ENCODE measurements at regions of chr1 and their contacts with region 1.

Region 1: GRCh38 chr1:22052115-22053016 is at the start of gene CDC42:
- DNase-seq: peak; percentile 98
- ATAC-seq: peak; percentile 87
- H3K4me3 Mint-ChIP-seq: peak within 1 kb of the TSS; percentile 95
- H3K27ac Mint-ChIP-seq: peak within 1 kb of the TSS; percentile 91
- H3K4me1 Mint-ChIP-seq: peaks cover 58% of the 10 kb centered on the region
- H3K27me3 Mint-ChIP-seq: no peaks in the 10 kb centered on the region
- CTCF ChIP-seq: no peak
- total RNA-seq, gene CDC42: 310 and 324 TPM in 2 replicates

Region 2: DNA sequence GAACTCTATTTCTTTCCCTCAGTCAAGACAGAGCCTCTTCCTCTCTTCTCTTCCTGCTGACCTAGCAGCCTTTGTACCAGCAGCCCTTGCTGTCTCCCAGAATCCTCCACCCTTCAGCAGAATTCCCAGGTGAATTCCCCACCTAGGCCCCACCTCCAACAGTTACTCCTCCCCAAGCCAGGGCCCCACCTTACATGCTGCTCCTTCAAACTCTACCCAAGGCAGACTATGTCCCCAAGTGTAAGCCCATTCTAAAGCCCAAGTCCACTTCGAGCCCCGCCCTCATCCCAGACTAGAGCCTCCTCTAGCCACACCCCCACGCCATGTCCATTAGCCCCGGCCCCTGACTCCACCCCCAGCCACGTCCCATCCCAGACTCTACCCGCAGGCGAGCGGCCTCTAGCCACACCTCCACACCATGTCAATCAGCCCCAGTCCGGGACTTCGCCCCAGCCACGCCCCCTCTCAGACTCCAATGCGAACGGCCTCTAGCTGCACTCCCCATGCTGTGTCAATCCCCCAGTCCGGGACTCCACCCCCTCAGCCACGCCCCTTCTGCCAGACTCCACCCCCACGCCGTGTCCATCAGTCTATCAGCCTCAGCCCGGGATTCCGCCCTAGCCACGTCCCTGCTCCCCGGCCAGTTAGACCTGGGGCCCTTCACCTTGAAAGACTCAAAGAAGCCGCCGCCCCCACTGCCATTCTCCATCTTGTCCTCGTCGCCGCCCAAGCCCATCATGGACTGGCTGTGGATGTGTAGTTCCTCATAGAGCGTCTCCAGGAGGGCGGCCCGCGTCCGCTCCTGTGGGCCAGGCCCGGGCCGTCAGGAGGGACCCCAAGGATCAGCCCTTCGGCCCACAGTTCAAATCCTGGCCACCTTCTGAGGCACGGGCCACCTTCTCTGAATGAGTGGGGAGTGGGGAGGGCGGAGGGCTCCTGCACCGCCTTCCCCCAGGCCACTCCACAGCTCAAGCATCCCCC is 444.5 kb before region 1 on chr1:
- CTCF ChIA-PET with region 1: no interaction called
- POLR2A ChIA-PET with region 1: no interaction called
- intact Hi-C with region 1: no loop called
- DNase-seq: peak; percentile 41
- ATAC-seq: peak; percentile 95
- H3K4me3 Mint-ChIP-seq: peak overlapping the region; percentile 60
- H3K27ac Mint-ChIP-seq: no peak overlapping the region
- H3K4me1 Mint-ChIP-seq: peaks cover 18% of the 10 kb centered on the region
- H3K27me3 Mint-ChIP-seq: peaks cover 6% of the 10 kb centered on the region
- CTCF ChIP-seq: no peak

Region 3: DNA sequence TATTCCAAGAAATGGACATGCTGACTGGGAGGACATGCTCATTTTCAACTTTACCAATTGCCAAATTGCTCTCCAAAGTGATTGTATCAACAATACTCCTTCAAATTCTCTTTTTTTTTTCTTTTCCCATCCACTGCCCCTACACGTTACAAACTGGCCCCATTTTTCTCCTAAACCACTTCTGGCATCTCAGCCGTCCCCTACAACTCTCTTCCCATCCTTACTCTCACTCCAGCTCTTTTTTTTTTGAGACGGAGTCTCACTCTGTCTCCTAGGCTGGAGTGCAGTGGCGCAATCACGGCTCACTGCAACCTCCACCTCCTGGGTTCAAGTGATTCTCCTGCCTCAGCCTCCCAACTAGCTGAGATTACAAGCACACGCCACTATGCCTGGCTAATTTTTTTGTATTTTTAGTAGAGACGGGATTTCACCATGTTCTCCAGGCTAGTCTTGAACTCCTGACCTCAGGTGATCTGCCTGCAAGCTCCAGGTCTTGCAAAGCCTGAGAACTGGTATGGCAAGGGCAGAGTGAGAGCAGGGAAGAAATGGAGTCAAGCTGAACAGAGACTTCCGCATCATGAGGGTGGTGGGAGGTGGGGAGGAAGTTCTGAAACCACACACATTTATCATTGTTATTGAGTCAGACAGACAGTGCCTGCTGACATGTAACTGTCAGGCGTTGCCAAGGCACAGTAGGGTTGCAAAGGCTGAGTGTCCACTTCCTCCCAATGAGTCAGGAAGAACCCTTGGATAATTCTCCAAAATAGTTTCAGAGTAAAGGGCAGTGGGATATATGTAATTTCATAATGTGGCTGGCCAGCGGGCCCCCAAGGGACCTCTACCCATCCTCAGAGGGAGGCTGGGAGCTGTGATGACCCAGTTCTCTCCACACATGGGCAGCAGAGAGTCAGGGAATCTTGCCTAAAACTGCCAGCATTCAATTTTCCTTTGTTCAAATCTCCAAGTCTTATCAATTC is 33.5 kb before region 1 on chr1:
- CTCF ChIA-PET with region 1: interaction called, 16 read pairs
- POLR2A ChIA-PET with region 1: interaction called, 659 read pairs
- intact Hi-C with region 1: loop called (anchors 1 kb)
- DNase-seq: peak; percentile 35
- ATAC-seq: peak; percentile 93
- H3K4me3 Mint-ChIP-seq: peak overlapping the region; percentile 66
- H3K27ac Mint-ChIP-seq: peak overlapping the region; percentile 91
- H3K4me1 Mint-ChIP-seq: peaks cover 30% of the 10 kb centered on the region
- H3K27me3 Mint-ChIP-seq: no peaks in the 10 kb centered on the region
- CTCF ChIP-seq: no peak

Region 4: GRCh38 chr1:22039594-22040285 is 12.6 kb before region 1 on chr1:
- CTCF ChIA-PET with region 1: interaction called, 9 read pairs
- POLR2A ChIA-PET with region 1: interaction called, 158 read pairs
- intact Hi-C with region 1: loop called (anchors 1 kb)
- DNase-seq: peak; percentile 62
- ATAC-seq: peak; percentile 98
- H3K4me3 Mint-ChIP-seq: peak overlapping the region; percentile 76
- H3K27ac Mint-ChIP-seq: peak overlapping the region; percentile 95
- H3K4me1 Mint-ChIP-seq: peaks cover 53% of the 10 kb centered on the region
- H3K27me3 Mint-ChIP-seq: no peaks in the 10 kb centered on the region
- CTCF ChIP-seq: no peak

Region 5: GRCh38 chr1:22064751-22065402 is 12.5 kb after region 1 on chr1:
- CTCF ChIA-PET with region 1: no interaction called
- POLR2A ChIA-PET with region 1: interaction called, 8 read pairs
- intact Hi-C with region 1: loop called (anchors 2 kb)
- DNase-seq: no peak
- ATAC-seq: no peak
- H3K4me3 Mint-ChIP-seq: peak overlapping the region; percentile 56
- H3K27ac Mint-ChIP-seq: no peak overlapping the region
- H3K4me1 Mint-ChIP-seq: peaks cover 95% of the 10 kb centered on the region
- H3K27me3 Mint-ChIP-seq: no peaks in the 10 kb centered on the region
- CTCF ChIP-seq: no peak

Region 6: GRCh38 chr1:22075718-22076117 is 23.4 kb after region 1 on chr1:
- CTCF ChIA-PET with region 1: no interaction called
- POLR2A ChIA-PET with region 1: interaction called, 13 read pairs
- intact Hi-C with region 1: loop called (anchors 2 kb)
- DNase-seq: no peak
- ATAC-seq: peak; percentile 43
- H3K4me3 Mint-ChIP-seq: peak overlapping the region; percentile 50
- H3K27ac Mint-ChIP-seq: peak overlapping the region; percentile 57
- H3K4me1 Mint-ChIP-seq: peaks cover 85% of the 10 kb centered on the region
- H3K27me3 Mint-ChIP-seq: no peaks in the 10 kb centered on the region
- CTCF ChIP-seq: no peak

Region 7: GRCh38 chr1:22089787-22090186 is 37.4 kb after region 1 on chr1:
- CTCF ChIA-PET with region 1: interaction called, 3 read pairs
- POLR2A ChIA-PET with region 1: interaction called, 6 read pairs
- intact Hi-C with region 1: loop called (anchors 5 kb)
- DNase-seq: no peak
- ATAC-seq: no peak
- H3K4me3 Mint-ChIP-seq: peak overlapping the region; percentile 42
- H3K27ac Mint-ChIP-seq: peak overlapping the region; percentile 57
- H3K4me1 Mint-ChIP-seq: peaks cover 83% of the 10 kb centered on the region
- H3K27me3 Mint-ChIP-seq: no peaks in the 10 kb centered on the region
- CTCF ChIP-seq: no peak

Region 8: DNA sequence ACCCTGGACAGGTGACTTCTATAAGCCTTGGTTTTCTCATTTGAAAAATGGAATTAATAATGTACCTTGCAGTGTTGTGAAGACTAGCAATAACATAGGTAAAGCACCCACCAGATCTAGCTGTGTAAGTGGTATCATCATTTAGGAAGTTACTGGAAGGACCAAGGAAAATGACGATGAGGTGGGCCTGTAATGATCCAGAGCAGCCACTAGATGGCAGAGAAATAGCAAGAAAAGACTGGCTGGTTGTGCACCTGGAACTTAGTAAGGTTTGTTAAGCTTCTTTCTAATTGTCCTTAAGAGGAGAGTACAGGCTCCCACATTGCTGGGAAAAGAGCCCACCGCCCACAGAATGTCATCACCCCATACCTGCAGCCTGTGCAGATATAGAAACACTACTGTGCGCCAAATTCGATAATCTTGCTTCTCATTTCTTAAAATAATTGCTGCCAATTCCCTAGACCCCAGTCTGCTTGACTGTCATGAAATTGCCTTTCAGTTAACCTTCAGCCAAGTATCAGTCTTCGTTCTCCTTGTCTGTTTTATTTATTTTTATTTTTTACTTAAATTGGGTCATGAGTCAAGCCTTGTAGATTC is 53.3 kb after region 1 on chr1:
- CTCF ChIA-PET with region 1: no interaction called
- POLR2A ChIA-PET with region 1: no interaction called
- intact Hi-C with region 1: no loop called
- DNase-seq: no peak
- ATAC-seq: peak; percentile 84
- H3K4me3 Mint-ChIP-seq: no peak overlapping the region
- H3K27ac Mint-ChIP-seq: peak overlapping the region; percentile 51
- H3K4me1 Mint-ChIP-seq: peaks cover 52% of the 10 kb centered on the region
- H3K27me3 Mint-ChIP-seq: no peaks in the 10 kb centered on the region
- CTCF ChIP-seq: peak; percentile 58